Caco-2 (cell line): ENCODE measurements at regions of chrX and their contacts with region 1.

Region 1: DNA sequence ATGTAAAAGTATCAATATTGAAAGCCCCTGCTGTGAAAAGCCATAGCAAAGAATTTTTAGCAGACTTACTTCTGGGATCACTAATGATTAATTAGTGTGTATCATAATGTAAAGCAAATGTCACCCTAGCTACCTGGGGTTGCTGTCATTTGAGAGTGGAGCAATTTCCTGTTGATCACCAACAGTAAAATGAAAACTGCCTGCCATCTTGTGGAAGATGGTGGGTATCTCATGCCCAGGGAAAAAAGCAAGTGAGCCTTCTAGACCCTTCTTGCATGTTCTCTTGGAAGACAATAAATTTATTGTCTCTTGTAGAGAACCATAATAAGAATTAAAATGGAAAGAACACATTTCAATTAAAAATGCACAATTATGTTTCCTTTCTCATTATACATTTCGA is 360.2 kb downstream of the ZIC3 start:
- DNase-seq: no peak
- H3K4me3 ChIP-seq: no peak overlapping the region
- H3K4me3 Mint-ChIP-seq: no peak overlapping the region
- H3K27ac Mint-ChIP-seq: no peak overlapping the region
- H3K4me1 ChIP-seq: no peaks in the 10 kb centered on the region
- H3K4me1 Mint-ChIP-seq: no peaks in the 10 kb centered on the region
- H3K27me3 ChIP-seq: no peaks in the 10 kb centered on the region
- H3K27me3 Mint-ChIP-seq: no peaks in the 10 kb centered on the region
- CTCF ChIP-seq: peak in 1 of 2 experiments; percentile 15

Region 2: DNA sequence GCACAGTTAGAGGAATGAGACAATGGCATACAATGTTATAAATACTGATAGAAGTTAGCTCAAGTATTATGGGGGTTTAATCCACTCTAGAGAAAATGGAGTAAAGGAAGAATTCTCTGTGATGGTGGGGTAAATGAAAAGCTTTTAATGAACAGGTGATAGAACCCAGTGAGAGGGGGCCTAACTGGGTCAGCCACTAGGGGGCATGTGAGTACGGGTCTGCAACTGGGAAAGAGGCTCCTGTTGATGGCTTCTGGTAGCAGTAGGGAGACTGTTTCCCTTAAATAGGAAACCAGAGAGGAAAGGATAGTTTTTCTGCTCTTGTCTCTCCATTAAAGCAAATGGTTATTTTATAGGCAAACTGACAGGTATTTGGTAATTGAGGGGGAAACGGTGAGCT is 759.5 kb before region 1 on chrX:
- CTCF ChIA-PET with region 1: no interaction called
- POLR2A ChIA-PET with region 1: no interaction called
- intact Hi-C with region 1: loop called (anchors 5 kb)
- DNase-seq: peak in 1 of 2 experiments; percentile 10
- H3K4me3 ChIP-seq: no peak overlapping the region
- H3K4me3 Mint-ChIP-seq: no peak overlapping the region
- H3K27ac Mint-ChIP-seq: no peak overlapping the region
- H3K4me1 ChIP-seq: no peaks in the 10 kb centered on the region
- H3K4me1 Mint-ChIP-seq: no peaks in the 10 kb centered on the region
- H3K27me3 ChIP-seq: no peaks in the 10 kb centered on the region
- H3K27me3 Mint-ChIP-seq: no peaks in the 10 kb centered on the region
- CTCF ChIP-seq: peak in 1 of 2 experiments; percentile 37

Region 3: DNA sequence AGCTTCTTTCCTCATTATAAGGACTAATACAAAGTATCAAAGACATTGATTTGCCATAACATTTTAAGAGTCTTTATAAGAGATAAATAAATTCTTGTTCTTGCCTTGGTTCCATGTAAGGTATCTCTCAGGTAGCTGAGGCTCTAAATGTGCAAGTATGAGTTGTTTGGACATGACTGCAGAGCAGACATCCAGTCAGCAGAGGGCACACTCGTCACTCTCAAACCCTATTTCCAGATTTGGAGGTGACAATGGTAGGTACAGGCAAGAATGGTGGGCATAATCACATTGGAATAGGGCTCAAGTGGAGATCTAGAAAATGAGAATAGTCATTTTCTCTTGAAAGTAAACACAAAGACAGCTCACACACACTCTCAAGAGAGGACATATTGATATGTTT is 493.5 kb before region 1 on chrX:
- CTCF ChIA-PET with region 1: no interaction called
- POLR2A ChIA-PET with region 1: no interaction called
- intact Hi-C with region 1: loop called (anchors 2 kb)
- DNase-seq: peak in 1 of 2 experiments; percentile 3
- H3K4me3 ChIP-seq: no peak overlapping the region
- H3K4me3 Mint-ChIP-seq: no peak overlapping the region
- H3K27ac Mint-ChIP-seq: no peak overlapping the region
- H3K4me1 ChIP-seq: no peaks in the 10 kb centered on the region
- H3K4me1 Mint-ChIP-seq: no peaks in the 10 kb centered on the region
- H3K27me3 ChIP-seq: no peaks in the 10 kb centered on the region
- H3K27me3 Mint-ChIP-seq: peaks cover 2% of the 10 kb centered on the region
- CTCF ChIP-seq: peak; percentile 12 to 25